Body of pancreas (tissue), 4 donors: ENCODE measurements at regions of chr1 and their contacts with region 1.

Region 1: DNA sequence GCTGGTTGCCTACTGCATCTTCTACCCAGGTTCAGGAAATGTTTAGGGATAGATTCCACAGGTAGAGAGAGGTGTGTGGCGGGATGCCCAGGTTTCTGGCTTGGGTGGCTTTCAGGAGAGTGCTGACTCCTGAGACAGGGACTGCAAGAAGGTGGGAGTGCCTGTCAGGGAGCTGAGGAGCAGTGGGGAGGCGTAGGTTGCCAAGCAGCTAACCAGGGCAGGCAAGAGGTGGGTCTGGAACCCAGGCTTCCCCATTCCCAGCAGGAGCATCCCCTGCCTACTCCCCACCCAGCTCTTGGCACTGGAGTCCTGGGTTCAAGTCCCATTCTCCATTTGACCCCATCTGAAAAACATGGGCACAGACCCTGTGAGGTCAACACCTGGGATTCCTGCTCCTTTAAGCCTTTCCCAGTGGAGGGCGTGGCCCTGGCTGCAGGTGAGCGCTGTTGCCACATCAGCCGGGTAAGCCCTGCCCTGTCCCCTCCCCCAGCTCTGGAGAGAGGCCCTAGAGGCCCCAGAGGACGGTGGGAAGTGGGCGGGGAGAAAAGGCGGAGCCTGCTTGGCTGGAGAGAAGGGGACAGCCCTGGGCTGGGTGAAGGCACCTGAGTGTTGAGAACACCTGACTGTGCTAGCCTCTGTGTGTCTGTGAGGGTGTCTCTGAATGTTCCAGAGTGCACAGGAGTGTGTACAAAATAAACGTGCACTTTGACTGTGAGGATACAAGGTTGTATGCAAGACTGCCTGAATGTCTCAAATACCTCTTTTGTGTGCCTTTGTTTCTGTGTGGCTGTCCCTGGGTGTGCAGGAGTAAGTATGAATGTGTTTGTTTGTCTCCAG is 14.0 kb upstream of the SYNC start:
- DNase-seq: peak; percentile 99 to 100 (median 100)
- ATAC-seq: peak; percentile 97
- H3K4me3 ChIP-seq: no peak overlapping the region
- H3K27ac ChIP-seq: peak overlapping the region; percentile 67 to 89 (median 84)
- H3K4me1 ChIP-seq: peaks cover 26% of the 10 kb centered on the region
- H3K27me3 ChIP-seq: no peaks in the 10 kb centered on the region
- CTCF ChIP-seq: peak in 4 of 7 experiments; percentile 3 to 36 (median 20)
- POLR2A ChIP-seq: peak in 2 of 3 donors; percentile 47 to 61

Region 2: DNA sequence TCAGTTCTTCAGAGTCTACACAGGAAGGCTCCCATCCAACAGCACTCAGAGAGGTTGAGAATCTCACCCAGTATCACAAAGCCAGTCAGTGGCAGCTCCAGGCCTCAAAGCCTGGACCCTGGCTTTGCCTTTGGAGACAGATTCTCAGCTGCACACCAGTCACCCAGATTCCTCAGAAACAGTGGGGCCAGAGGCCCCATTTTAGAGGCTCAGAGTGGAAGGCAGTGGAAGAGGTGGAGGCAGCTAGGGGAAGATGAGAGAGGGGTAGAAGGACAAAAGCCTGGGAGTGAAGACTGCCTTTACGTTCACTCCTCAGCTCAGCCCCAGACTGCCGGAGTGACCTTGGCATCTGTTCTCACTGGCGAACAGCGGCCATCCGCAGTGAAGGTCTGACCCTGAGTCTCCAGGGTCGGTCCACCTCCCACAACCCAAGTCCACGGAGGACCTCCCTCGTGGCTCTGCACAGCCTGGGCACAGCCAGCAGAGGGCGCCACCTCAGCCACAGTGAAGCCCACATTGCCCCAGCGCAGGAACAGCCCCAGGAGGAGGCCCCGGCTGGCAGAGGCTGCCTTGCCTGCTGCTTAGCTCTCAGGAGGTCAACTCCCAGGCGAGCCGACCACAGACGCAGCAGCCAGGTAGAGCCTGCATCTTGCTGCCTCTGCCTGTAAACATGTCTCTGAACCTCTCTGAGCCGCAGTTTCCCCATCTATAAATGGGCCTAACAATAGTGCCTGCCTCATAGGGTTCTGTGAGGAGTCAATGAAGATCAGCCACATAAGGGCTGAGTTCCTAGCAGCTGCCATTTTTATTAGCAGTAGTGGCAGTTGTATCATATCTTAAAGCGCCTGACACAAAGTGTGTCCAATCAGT is 160.0 kb after region 1 on chr1:
- intact Hi-C with region 1: loop called (anchors 10 kb)
- DNase-seq: peak; percentile 71 to 81 (median 73)
- ATAC-seq: peak; percentile 68
- H3K4me3 ChIP-seq: no peak overlapping the region
- H3K27ac ChIP-seq: no peak overlapping the region
- H3K4me1 ChIP-seq: peaks cover 10% of the 10 kb centered on the region
- H3K27me3 ChIP-seq: no peaks in the 10 kb centered on the region
- CTCF ChIP-seq: peak; percentile 62 to 89 (median 83)
- POLR2A ChIP-seq: no peak